ENCODE measurements at regions of chr18 and their contacts with region 1.

Region 1: GRCh38 chr18:2985628-2986027 is 27.3 kb downstream of the LPIN2 start:
- DNase-seq: peak in 6 of 35 experiments; percentile 17 to 77 (median 32)
- ATAC-seq: peak; percentile 57 to 67 (median 60)
- H3K4me3 ChIP-seq: no peak overlapping the region
- H3K4me3 Mint-ChIP-seq: peak overlapping the region in 1 of 3 donors; percentile 7
- H3K27ac ChIP-seq: no peak overlapping the region
- H3K27ac Mint-ChIP-seq: peak overlapping the region; percentile 44 to 89
- H3K4me1 ChIP-seq: peaks cover 18 to 38% of the 10 kb centered on the region in 2 experiments
- H3K4me1 Mint-ChIP-seq: peaks cover 59 to 80% (median 69%) of the 10 kb centered on the region in 3 donors
- H3K27me3 ChIP-seq: no peaks in the 10 kb centered on the region
- H3K27me3 Mint-ChIP-seq: no peaks in the 10 kb centered on the region

Region 2: GRCh38 chr18:2932247-2933181 is 53.1 kb before region 1 on chr18:
- CTCF ChIA-PET with region 1: interaction called, 16 to 99 read pairs
- POLR2A ChIA-PET with region 1: interaction called, 8 to 9 read pairs
- DNase-seq: peak in 21 of 35 experiments; percentile 8 to 85 (median 37)
- ATAC-seq: peak; percentile 60 to 75 (median 66)
- H3K4me3 ChIP-seq: no peak overlapping the region
- H3K4me3 Mint-ChIP-seq: peak overlapping the region in 1 of 3 donors; percentile 35
- H3K27ac ChIP-seq: peak overlapping the region; percentile 52
- H3K27ac Mint-ChIP-seq: peak overlapping the region; percentile 88 to 89
- H3K4me1 ChIP-seq: peaks cover 0 to 6% of the 10 kb centered on the region in 2 experiments
- H3K4me1 Mint-ChIP-seq: peaks cover 29 to 36% (median 35%) of the 10 kb centered on the region in 3 donors
- H3K27me3 ChIP-seq: no peaks in the 10 kb centered on the region
- H3K27me3 Mint-ChIP-seq: no peaks in the 10 kb centered on the region

Region 3: DNA sequence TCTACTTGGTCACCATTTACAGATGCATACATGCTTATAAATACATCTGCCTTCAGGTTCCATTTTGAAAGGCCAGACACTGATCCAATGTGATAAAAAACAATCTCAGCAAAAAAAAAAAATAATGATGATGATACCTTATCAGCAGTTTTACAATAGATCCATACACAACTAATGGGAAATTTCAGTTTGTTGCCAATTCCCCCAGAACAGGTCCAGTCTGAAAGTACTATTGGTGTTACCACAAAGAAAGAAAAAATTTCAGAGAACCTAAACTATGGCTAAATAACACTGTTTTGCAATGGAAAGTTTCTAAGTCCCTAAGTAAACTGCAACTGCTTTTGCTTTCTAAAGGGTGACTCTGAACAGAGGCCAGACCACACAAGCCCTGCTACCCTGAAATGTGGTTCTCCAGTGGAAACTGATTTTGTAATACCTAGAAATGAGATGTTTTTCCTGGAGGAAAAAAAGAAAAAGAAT is 26.8 kb before region 1 on chr18:
- CTCF ChIA-PET with region 1: interaction called, 9 to 197 read pairs
- POLR2A ChIA-PET with region 1: interaction called, 4 to 10 read pairs
- DNase-seq: peak in 1 of 35 experiments; percentile 53
- ATAC-seq: peak in 1 of 4 experiments; percentile 18
- H3K4me3 ChIP-seq: no peak overlapping the region
- H3K4me3 Mint-ChIP-seq: peak overlapping the region; percentile 46 to 72 (median 62)
- H3K27ac ChIP-seq: peak overlapping the region; percentile 94
- H3K27ac Mint-ChIP-seq: peak overlapping the region; percentile 95
- H3K4me1 ChIP-seq: peaks cover 67 to 77% of the 10 kb centered on the region in 2 experiments
- H3K4me1 Mint-ChIP-seq: peaks cover 91 to 95% (median 94%) of the 10 kb centered on the region in 3 donors
- H3K27me3 ChIP-seq: no peaks in the 10 kb centered on the region
- H3K27me3 Mint-ChIP-seq: no peaks in the 10 kb centered on the region

Region 4: GRCh38 chr18:2971741-2972552 is 13.7 kb before region 1 on chr18:
- CTCF ChIA-PET with region 1: interaction called, 4 to 34 read pairs
- POLR2A ChIA-PET with region 1: interaction called in 1 of 2 experiments, 8 read pairs
- DNase-seq: peak in 33 of 35 experiments; percentile 44 to 82 (median 69)
- ATAC-seq: peak; percentile 53 to 72 (median 65)
- H3K4me3 ChIP-seq: peak overlapping the region; percentile 35
- H3K4me3 Mint-ChIP-seq: peak overlapping the region; percentile 75 to 89 (median 86)
- H3K27ac ChIP-seq: peak overlapping the region; percentile 94
- H3K27ac Mint-ChIP-seq: peak overlapping the region; percentile 95 to 96
- H3K4me1 ChIP-seq: peaks cover 56 to 70% of the 10 kb centered on the region in 2 experiments
- H3K4me1 Mint-ChIP-seq: peaks cover 94 to 97% (median 95%) of the 10 kb centered on the region in 3 donors
- H3K27me3 ChIP-seq: no peaks in the 10 kb centered on the region
- H3K27me3 Mint-ChIP-seq: no peaks in the 10 kb centered on the region

Region 5: DNA sequence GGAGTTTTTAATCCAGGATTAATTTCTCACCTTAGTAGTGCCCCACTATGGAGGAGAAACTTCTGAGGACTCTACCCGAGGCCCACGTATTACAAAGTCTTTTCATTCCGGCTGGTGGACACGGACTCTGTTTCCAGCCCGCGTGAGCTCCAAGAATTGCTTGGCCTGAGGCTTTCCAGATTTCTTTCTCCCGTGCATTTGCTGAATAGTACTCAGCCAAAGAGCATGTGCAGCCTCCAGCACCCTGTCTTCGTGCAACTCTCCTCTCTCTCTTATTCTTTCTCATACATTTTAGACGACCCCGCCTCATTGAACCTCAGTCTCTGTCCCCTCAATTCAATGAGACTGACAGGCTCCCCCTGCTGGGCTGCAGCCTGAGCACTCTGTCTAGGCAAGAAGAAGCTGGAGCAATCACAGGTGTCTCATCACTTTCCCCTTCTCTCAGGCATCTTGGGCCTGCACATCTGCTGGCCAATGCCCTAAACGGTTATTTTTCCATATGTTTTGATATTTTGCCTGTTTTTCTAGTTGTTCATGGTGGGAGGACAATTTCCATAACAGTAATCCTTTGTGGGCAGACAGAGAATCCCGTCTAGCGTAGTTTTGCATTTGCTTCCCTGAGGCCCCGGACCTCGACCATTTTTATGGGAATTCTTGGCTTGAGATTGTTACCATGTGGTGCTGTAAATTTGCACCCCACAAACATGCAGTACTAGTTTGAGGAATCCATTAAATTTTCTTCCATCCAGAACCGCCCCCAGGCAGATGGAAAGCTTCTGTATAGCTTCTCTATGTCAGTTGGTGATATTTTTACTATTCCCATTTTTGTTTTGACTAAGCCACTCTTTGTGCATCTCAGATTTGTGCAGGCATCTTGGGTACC is 77.4 kb after region 1 on chr18:
- CTCF ChIA-PET with region 1: interaction called, 8 to 24 read pairs
- POLR2A ChIA-PET with region 1: interaction called in 1 of 2 experiments, 4 read pairs
- DNase-seq: peak; percentile 38 to 79 (median 66)
- ATAC-seq: peak; percentile 48 to 59 (median 54)
- H3K4me3 ChIP-seq: peak overlapping the region in 1 of 2 donors; percentile 10
- H3K4me3 Mint-ChIP-seq: peak overlapping the region; percentile 51 to 81 (median 72)
- H3K27ac ChIP-seq: peak overlapping the region; percentile 100
- H3K27ac Mint-ChIP-seq: peak overlapping the region; percentile 92 to 96
- H3K4me1 ChIP-seq: peaks cover 48 to 64% of the 10 kb centered on the region in 2 experiments
- H3K4me1 Mint-ChIP-seq: peaks cover 70 to 73% (median 73%) of the 10 kb centered on the region in 3 donors
- H3K27me3 ChIP-seq: no peaks in the 10 kb centered on the region
- H3K27me3 Mint-ChIP-seq: no peaks in the 10 kb centered on the region

Region 6: GRCh38 chr18:3086871-3087270 is 101.2 kb after region 1 on chr18:
- CTCF ChIA-PET with region 1: no interaction called
- POLR2A ChIA-PET with region 1: no interaction called
- DNase-seq: no peak
- ATAC-seq: no peak
- H3K4me3 ChIP-seq: no peak overlapping the region
- H3K4me3 Mint-ChIP-seq: no peak overlapping the region
- H3K27ac ChIP-seq: no peak overlapping the region
- H3K27ac Mint-ChIP-seq: no peak overlapping the region
- H3K4me1 ChIP-seq: peaks cover 2 to 10% of the 10 kb centered on the region in 2 experiments
- H3K4me1 Mint-ChIP-seq: peaks cover 10 to 17% (median 10%) of the 10 kb centered on the region in 3 donors
- H3K27me3 ChIP-seq: no peaks in the 10 kb centered on the region
- H3K27me3 Mint-ChIP-seq: no peaks in the 10 kb centered on the region

Measured in T-cell (primary cell).